Activated CD4-positive, alpha-beta T cell treated with anti-CD3 and anti-CD28 coated beads for 36 hours (primary cell): ENCODE measurements at regions of chr12 and their contacts with region 1.

Region 1: GRCh38 chr12:92649511-92650227 is 53.1 kb upstream of the PLEKHG7 start:
- DNase-seq: peak; percentile 71
- ATAC-seq: peak; percentile 90
- H3K4me3 Mint-ChIP-seq: no peak overlapping the region
- H3K27ac Mint-ChIP-seq: no peak overlapping the region
- H3K4me1 Mint-ChIP-seq: peaks cover 10% of the 10 kb centered on the region
- H3K27me3 Mint-ChIP-seq: no peaks in the 10 kb centered on the region

Region 2: GRCh38 chr12:91361864-91362263 is 1287.8 kb before region 1 on chr12:
- CTCF ChIA-PET with region 1: interaction called, 9 read pairs
- POLR2A ChIA-PET with region 1: no interaction called
- intact Hi-C with region 1: loop called (anchors 1 to 2 kb)
- DNase-seq: no peak
- ATAC-seq: no peak
- H3K4me3 Mint-ChIP-seq: no peak overlapping the region
- H3K27ac Mint-ChIP-seq: no peak overlapping the region
- H3K4me1 Mint-ChIP-seq: no peaks in the 10 kb centered on the region
- H3K27me3 Mint-ChIP-seq: no peaks in the 10 kb centered on the region

Region 3: GRCh38 chr12:91577586-91578539 is 1071.8 kb before region 1 on chr12:
- CTCF ChIA-PET with region 1: no interaction called
- POLR2A ChIA-PET with region 1: no interaction called
- intact Hi-C with region 1: loop called in 1 of 2 experiments (anchors 5 kb)
- DNase-seq: no peak
- ATAC-seq: peak; percentile 47
- H3K4me3 Mint-ChIP-seq: peak overlapping the region; percentile 35
- H3K27ac Mint-ChIP-seq: peak overlapping the region; percentile 32
- H3K4me1 Mint-ChIP-seq: peaks cover 8% of the 10 kb centered on the region
- H3K27me3 Mint-ChIP-seq: no peaks in the 10 kb centered on the region

Region 4: DNA sequence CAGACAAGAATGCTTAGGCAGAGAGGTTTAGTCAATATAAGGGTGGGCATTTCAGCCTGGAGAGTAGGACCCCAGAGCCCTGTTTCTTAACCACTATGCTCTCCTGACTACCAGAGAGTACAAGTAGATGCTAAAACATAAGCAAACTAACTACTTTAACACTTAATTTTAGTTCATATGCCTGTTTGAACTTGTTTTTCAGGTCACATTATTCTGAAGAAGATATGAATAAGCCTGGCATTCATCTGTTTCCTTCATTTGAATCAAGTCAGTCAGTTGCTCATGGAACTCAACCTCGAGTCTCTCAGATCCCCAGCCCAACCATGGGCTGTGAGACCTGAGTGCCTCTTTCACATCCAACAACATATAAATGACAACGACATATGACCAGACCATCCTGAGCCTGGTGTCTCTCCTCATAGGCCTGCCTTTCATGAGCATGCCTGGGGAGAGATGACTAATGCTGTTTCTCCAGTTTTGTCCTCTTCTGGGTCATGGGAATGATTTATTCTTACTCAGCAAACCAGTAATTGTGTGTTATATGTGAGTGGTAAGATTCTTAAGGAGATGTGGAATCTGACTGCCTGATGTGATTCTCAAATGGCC is 252.9 kb before region 1 on chr12:
- CTCF ChIA-PET with region 1: no interaction called
- POLR2A ChIA-PET with region 1: no interaction called
- intact Hi-C with region 1: loop called in 1 of 2 experiments (anchors 1 kb)
- DNase-seq: peak; percentile 46
- ATAC-seq: peak; percentile 44
- H3K4me3 Mint-ChIP-seq: no peak overlapping the region
- H3K27ac Mint-ChIP-seq: peak overlapping the region; percentile 95
- H3K4me1 Mint-ChIP-seq: peaks cover 93% of the 10 kb centered on the region
- H3K27me3 Mint-ChIP-seq: no peaks in the 10 kb centered on the region

Region 5: GRCh38 chr12:92585115-92585727 is 64.4 kb before region 1 on chr12:
- CTCF ChIA-PET with region 1: no interaction called
- POLR2A ChIA-PET with region 1: no interaction called
- intact Hi-C with region 1: no loop called
- DNase-seq: no peak
- ATAC-seq: no peak
- H3K4me3 Mint-ChIP-seq: no peak overlapping the region
- H3K27ac Mint-ChIP-seq: no peak overlapping the region
- H3K4me1 Mint-ChIP-seq: peaks cover 7% of the 10 kb centered on the region
- H3K27me3 Mint-ChIP-seq: no peaks in the 10 kb centered on the region

Region 6: GRCh38 chr12:92619730-92620684 is 29.7 kb before region 1 on chr12:
- CTCF ChIA-PET with region 1: interaction called, 10 read pairs
- POLR2A ChIA-PET with region 1: no interaction called
- intact Hi-C with region 1: no loop called
- DNase-seq: no peak
- ATAC-seq: no peak
- H3K4me3 Mint-ChIP-seq: no peak overlapping the region
- H3K27ac Mint-ChIP-seq: no peak overlapping the region
- H3K4me1 Mint-ChIP-seq: no peaks in the 10 kb centered on the region
- H3K27me3 Mint-ChIP-seq: no peaks in the 10 kb centered on the region